ENCODE measurements at regions of chr15 and their contacts with region 1.

Region 1: GRCh38 chr15:80058851-80059785 is at the start of gene ZFAND6:
- DNase-seq: peak; percentile 95
- H3K4me3 Mint-ChIP-seq: peak within 1 kb of the TSS; percentile 91
- H3K27ac Mint-ChIP-seq: peak within 1 kb of the TSS; percentile 90
- H3K4me1 Mint-ChIP-seq: peaks cover 35% of the 10 kb centered on the region
- H3K27me3 Mint-ChIP-seq: peaks cover 2% of the 10 kb centered on the region
- total RNA-seq, gene ZFAND6: 43.3 and 50.3 TPM in 2 replicates

Region 2: GRCh38 chr15:79896637-79897379 is 162.3 kb before region 1 on chr15 and contains the start of gene MTHFS:
- intact Hi-C with region 1: loop called (anchors 2 kb)
- DNase-seq: peak; percentile 75
- H3K4me3 Mint-ChIP-seq: peak within 1 kb of the TSS; percentile 97
- H3K27ac Mint-ChIP-seq: peak within 1 kb of the TSS; percentile 96
- H3K4me1 Mint-ChIP-seq: peaks cover 44% of the 10 kb centered on the region
- H3K27me3 Mint-ChIP-seq: no peaks in the 10 kb centered on the region
- total RNA-seq, gene MTHFS: 32.2 and 34.0 TPM in 2 replicates

Region 3: GRCh38 chr15:79970624-79971434 is 88.3 kb before region 1 on chr15 and contains the start of gene BCL2A1:
- intact Hi-C with region 1: loop called (anchors 1 kb)
- DNase-seq: peak; percentile 64
- H3K4me3 Mint-ChIP-seq: peak within 1 kb of the TSS; percentile 96
- H3K27ac Mint-ChIP-seq: peak within 1 kb of the TSS; percentile 96
- H3K4me1 Mint-ChIP-seq: peaks cover 54% of the 10 kb centered on the region
- H3K27me3 Mint-ChIP-seq: no peaks in the 10 kb centered on the region
- total RNA-seq, gene BCL2A1: 91.8 and 95.0 TPM in 2 replicates

Region 4: DNA sequence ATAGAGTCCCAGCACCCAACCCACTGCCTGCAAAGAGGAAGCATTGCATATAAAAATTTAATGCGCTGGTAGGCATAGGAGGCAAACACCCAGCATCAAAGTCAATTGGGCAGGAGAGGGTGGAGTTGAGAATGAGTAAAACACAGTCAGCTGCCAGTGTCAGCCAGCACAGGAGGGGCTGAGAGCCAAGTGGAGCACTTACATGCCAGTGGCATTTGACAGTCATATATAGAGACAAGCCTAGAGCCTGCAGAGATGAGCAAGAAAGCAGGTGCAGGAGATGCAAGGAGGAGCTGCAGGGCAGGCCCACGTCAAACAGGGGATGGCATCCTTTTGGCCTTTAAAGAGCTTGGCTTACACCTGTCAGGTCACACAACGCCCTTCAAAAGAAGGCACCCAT is 27.3 kb before region 1 on chr15:
- intact Hi-C with region 1: loop called (anchors 1 kb)
- DNase-seq: peak; percentile 16
- H3K4me3 Mint-ChIP-seq: no peak overlapping the region
- H3K27ac Mint-ChIP-seq: peak overlapping the region; percentile 85
- H3K4me1 Mint-ChIP-seq: peaks cover 42% of the 10 kb centered on the region
- H3K27me3 Mint-ChIP-seq: no peaks in the 10 kb centered on the region

Region 5: GRCh38 chr15:80173022-80173759 is 114.1 kb after region 1 on chr15:
- intact Hi-C with region 1: loop called (anchors 1 kb)
- DNase-seq: peak; percentile 57
- H3K4me3 Mint-ChIP-seq: no peak overlapping the region
- H3K27ac Mint-ChIP-seq: no peak overlapping the region
- H3K4me1 Mint-ChIP-seq: peaks cover 5% of the 10 kb centered on the region
- H3K27me3 Mint-ChIP-seq: no peaks in the 10 kb centered on the region

Measured in activated T-helper 1 cell treated with anti-CD3 and anti-CD28 coated beads, Interleukin-12 subunit alpha, Interleukin-12 subunit beta, Interleukin-2, Interleukin-4 antibody, amounts not matched to agents 30 ng/mL and 10 ng/mL and 1 ng/mL, durations not matched to agents 14 hours and 24 hours and 36 hours (primary cell).